ENCODE measurements at regions of chr3 and their contacts with region 1.

Region 1: DNA sequence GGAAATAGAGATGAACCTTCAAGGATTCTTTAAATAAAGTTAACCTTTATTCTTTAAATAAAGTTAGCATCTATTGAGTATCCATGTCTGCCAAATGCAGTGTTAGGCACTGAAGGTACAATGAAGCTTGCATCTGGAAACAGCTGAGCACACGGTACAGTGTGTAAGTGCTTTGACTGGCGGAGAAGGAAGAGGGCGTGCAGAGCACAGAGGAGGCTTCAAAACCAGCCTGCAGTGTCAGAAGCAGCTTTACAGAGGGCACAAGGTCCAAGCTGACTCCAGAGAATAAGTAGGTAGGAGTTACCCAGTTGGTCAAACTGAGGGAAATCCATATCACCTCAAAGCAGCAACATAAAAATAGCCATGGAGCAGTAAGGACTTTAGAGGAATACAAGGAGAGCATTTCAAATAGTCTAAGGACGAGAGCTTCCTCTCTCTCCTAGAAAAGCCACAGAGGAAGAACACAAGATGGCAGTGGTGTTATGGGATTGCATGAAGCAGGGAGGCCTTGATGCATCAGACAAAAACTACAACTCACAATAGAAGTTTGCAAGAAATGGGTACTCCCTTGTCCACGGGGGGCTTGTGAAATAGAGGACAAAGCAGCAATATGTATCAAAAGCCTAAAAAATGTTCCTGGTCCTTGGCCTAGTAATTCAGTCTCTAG is 60.3 kb upstream of the PPP2R3A start:
- DNase-seq: no peak
- H3K4me3 ChIP-seq: no peak overlapping the region
- H3K27ac ChIP-seq: no peak overlapping the region
- H3K4me1 ChIP-seq: no peaks in the 10 kb centered on the region
- H3K27me3 ChIP-seq: no peaks in the 10 kb centered on the region
- CTCF ChIP-seq: no peak
- POLR2A ChIP-seq: no peak

Region 2: GRCh38 chr3:135597855-135598254 is 307.3 kb before region 1 on chr3:
- intact Hi-C with region 1: no loop called
- DNase-seq: no peak
- H3K4me3 ChIP-seq: no peak overlapping the region
- H3K27ac ChIP-seq: no peak overlapping the region
- H3K4me1 ChIP-seq: no peaks in the 10 kb centered on the region
- H3K27me3 ChIP-seq: no peaks in the 10 kb centered on the region
- CTCF ChIP-seq: no peak
- POLR2A ChIP-seq: no peak

Region 3: GRCh38 chr3:136042608-136043221 is 137.5 kb after region 1 on chr3:
- intact Hi-C with region 1: loop called (anchors 5 kb)
- DNase-seq: no peak
- H3K4me3 ChIP-seq: no peak overlapping the region
- H3K27ac ChIP-seq: no peak overlapping the region
- H3K4me1 ChIP-seq: no peaks in the 10 kb centered on the region
- H3K27me3 ChIP-seq: no peaks in the 10 kb centered on the region
- CTCF ChIP-seq: peak in 7 of 11 experiments; percentile 25 to 51 (median 34)
- POLR2A ChIP-seq: no peak

Region 4: GRCh38 chr3:136326316-136326715 is 421.1 kb after region 1 on chr3:
- intact Hi-C with region 1: no loop called
- DNase-seq: no peak
- H3K4me3 ChIP-seq: no peak overlapping the region
- H3K27ac ChIP-seq: no peak overlapping the region
- H3K4me1 ChIP-seq: no peaks in the 10 kb centered on the region
- H3K27me3 ChIP-seq: no peaks in the 10 kb centered on the region
- CTCF ChIP-seq: no peak
- POLR2A ChIP-seq: no peak